ENCODE measurements at regions of chr12 and their contacts with region 1.

Region 1: DNA sequence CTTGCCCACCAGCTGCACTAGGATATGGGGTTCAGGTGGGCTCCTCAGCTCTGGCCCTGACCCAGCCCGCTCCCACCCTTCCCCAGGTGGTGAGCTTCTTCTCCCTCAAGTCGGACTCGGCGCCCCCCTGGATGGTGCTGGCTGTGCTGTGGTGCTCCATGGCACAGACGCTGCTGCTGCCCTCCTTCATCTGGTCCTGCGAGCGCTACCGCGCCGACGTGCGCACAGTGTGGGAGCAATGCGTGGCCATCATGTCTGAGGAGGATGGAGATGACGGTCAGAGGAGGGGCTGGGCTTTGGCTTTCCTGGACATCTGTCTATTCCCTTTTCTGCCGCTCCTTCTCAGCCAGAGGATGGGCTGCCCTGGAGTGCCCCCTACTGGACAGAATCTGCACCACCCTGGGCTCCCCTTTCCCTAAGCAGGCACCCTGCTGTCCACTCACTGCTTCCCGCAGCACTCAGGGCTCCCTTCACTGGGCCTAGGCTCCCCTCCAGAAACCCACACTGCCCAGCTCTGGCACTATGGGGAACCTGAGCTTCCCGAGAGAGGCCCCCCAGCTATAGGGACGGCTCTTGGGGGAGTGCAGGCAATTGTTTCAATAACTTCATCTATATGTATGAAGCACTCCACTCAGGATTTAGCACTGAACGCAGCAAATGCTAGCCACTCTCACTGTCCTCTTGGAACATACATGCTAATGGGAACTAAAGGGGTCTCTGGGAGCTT is 2.6 kb upstream of the P3H3 start:
- DNase-seq: peak; percentile 89
- H3K4me3 ChIP-seq: no peak overlapping the region
- H3K27ac ChIP-seq: no peak overlapping the region
- H3K4me1 ChIP-seq: peaks cover 14 to 47% (median 30%) of the 10 kb centered on the region in 4 donors
- H3K27me3 ChIP-seq: peaks cover 67% of the 10 kb centered on the region
- CTCF ChIP-seq: peak; percentile 90 to 95 (median 92)
- EP300 ChIP-seq: no peak
- POLR2A ChIP-seq: no peak

Region 2: DNA sequence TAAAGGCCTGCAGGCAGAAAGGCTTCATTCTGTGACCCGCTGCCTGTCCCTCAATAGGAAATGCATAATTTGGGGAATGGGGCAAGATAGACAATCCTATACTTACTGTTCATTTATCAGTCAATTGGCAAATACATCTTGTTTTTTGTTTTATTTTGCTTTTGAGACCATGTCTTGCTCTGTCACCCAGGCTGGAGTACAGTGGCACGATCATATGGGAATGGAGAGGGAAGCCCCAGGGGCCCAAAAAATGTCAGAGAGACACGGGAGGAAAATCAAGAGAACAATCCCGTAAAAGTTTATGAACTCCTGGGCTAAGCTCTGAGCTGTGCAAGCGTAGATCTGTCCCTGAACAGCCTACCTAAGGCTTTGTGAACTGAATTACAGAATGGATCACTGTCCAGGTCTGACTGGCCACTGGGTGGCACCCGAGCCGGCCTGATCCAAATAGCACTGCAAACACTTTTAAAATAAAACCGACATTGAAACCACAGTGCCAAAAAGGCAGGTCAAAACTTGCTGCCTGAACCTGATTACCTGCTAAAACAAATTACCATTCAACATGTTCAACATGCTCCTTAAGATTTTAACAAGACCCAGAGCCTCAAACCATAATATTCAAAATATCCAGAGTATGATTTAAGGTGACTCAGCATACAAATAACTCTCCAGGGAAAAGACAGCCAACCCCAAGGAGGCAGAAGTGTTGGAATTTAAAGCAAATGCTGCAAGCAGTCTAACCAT is 89.9 kb before region 1 on chr12:
- in situ Hi-C with region 1: loop called in 3 of 4 experiments (anchors 10 to 25 kb)
- intact Hi-C with region 1: loop called (anchors 5 kb)
- DNase-seq: peak; percentile 69
- H3K4me3 ChIP-seq: no peak overlapping the region
- H3K27ac ChIP-seq: peak overlapping the region in 2 of 4 donors; percentile 17 to 20
- H3K4me1 ChIP-seq: no peaks in the 10 kb centered on the region
- H3K27me3 ChIP-seq: no peaks in the 10 kb centered on the region
- CTCF ChIP-seq: peak; percentile 62 to 74 (median 69)
- EP300 ChIP-seq: no peak
- POLR2A ChIP-seq: no peak

Region 3: DNA sequence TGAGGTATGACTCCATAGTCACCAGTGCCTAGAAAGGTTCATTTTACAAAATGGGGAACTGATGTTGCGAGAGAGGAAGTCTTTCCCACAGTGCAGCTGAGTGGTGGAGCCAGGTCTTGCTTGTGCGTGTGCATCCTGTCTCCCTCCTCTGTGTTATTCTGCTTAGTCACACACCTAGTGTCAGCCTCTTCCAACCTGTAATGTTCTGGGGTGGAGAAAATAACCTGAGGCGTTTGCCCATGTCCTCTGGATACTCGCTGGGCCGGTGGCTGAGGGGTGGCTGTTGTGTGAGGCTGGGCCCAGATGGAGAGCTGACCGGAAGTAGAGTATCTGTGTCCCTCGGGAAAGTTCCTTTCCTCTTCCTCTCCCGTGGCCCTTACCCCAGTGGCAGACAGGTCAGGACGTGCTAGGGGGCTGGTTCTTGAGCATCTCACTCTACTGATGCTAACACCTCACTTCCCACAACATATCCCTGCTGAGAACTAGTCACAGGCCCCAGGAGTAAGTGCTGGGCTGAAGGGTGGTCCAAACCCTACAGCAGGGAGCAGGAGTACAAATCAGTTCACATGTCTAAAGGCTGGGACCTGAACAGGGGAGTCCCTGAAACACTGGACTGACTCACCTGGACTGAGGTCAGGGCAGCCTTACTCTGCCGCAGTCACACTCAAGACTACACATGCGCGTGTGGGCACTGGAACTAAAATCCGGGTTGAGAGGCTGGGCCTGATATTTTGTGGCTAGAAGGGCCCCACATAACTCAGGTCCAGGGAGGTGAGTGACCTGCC is 79.6 kb before region 1 on chr12:
- in situ Hi-C with region 1: loop called in 3 of 4 experiments (anchors 10 to 25 kb)
- intact Hi-C with region 1: no loop called
- DNase-seq: no peak
- H3K4me3 ChIP-seq: no peak overlapping the region
- H3K27ac ChIP-seq: peak overlapping the region in 1 of 4 donors; percentile 42
- H3K4me1 ChIP-seq: no peaks in the 10 kb centered on the region
- H3K27me3 ChIP-seq: no peaks in the 10 kb centered on the region
- CTCF ChIP-seq: no peak
- EP300 ChIP-seq: no peak
- POLR2A ChIP-seq: no peak

Region 4: GRCh38 chr12:6899837-6900519 is 74.4 kb after region 1 on chr12:
- in situ Hi-C with region 1: no loop called
- intact Hi-C with region 1: no loop called
- DNase-seq: peak; percentile 85
- H3K4me3 ChIP-seq: no peak overlapping the region
- H3K27ac ChIP-seq: peak overlapping the region; percentile 30 to 70 (median 63)
- H3K4me1 ChIP-seq: peaks cover under 1 to 21% (median 18%) of the 10 kb centered on the region in 4 donors
- H3K27me3 ChIP-seq: no peaks in the 10 kb centered on the region
- CTCF ChIP-seq: no peak
- EP300 ChIP-seq: no peak
- POLR2A ChIP-seq: peak; percentile 43

Region 5: DNA sequence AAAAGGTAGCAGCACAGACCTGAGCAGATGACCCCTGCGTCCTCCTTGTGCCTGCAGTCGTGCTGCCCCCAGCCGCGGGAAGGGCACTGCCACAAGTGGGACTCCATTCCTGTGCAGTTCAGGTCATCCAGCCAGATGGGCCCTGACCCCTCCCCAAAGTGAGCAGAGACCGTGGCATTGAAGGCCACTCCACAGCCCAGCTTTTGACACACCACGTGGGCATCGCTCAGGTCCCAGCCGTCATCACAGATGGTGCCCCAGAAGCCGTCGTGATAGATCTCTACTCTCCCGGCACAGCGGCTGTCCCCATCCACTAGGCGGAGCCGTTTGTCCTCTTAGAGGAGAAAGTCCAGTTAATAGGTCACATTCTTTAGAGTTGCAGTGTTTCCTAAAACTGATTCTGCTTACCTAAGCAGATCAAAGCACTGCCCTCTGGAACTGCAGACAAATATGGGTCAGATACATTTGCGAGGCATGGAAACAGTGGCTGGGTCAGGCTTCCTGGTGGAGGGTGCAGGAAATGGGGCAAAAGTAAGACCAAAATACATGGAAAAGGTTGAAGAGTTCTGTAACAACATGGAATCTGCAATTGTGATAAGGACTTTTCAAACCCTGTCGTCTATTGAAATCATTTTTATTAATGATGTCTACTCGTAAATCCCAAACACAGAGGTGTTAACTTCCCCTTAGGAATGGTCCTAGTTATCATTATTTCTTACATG is 549.0 kb after region 1 on chr12:
- in situ Hi-C with region 1: no loop called
- intact Hi-C with region 1: no loop called
- DNase-seq: peak; percentile 42
- H3K4me3 ChIP-seq: no peak overlapping the region
- H3K27ac ChIP-seq: no peak overlapping the region
- H3K4me1 ChIP-seq: no peaks in the 10 kb centered on the region
- H3K27me3 ChIP-seq: no peaks in the 10 kb centered on the region
- CTCF ChIP-seq: peak; percentile 21 to 39 (median 37)
- EP300 ChIP-seq: no peak
- POLR2A ChIP-seq: no peak

Measured in transverse colon (tissue), 4 donors.